Heart right ventricle (tissue), 16 donors: ENCODE measurements at regions of chr17 and their contacts with region 1.

Region 1: GRCh38 chr17:68634403-68634802 is 33.2 kb upstream of the FAM20A start:
- DNase-seq: no peak
- ATAC-seq: no peak
- H3K4me3 ChIP-seq: no peak overlapping the region
- H3K27ac ChIP-seq: no peak overlapping the region
- H3K4me1 ChIP-seq: no peaks in the 10 kb centered on the region
- H3K27me3 ChIP-seq: no peaks in the 10 kb centered on the region
- CTCF ChIP-seq: no peak

Region 2: DNA sequence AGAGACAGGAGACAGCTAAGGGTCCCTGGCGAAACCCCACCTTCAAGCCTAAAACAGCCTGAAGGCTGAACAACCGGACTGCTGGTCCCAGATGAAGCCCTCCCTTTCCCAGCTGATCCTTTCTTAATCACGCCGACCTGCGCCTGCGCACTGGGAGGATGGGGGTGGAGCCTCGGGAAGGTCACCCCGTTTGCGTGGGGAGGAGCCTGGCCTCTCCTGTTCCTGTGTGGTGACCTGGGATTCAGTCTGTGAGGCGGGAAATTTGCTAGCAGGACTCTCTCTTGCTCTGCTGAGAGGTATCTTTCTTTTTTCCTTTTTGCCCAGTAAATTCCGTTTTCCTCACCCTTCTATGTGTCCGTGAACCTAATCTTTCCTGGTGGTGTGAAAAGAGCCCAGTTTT is 42.8 kb before region 1 on chr17:
- intact Hi-C with region 1: no loop called
- DNase-seq: peak; percentile 29 to 31
- ATAC-seq: peak in 2 of 8 donors; percentile 24 to 52
- H3K4me3 ChIP-seq: no peak overlapping the region
- H3K27ac ChIP-seq: peak overlapping the region in 1 of 10 donors; percentile 45
- H3K4me1 ChIP-seq: peaks cover 0 to 50% (median 15%) of the 10 kb centered on the region in 9 donors
- H3K27me3 ChIP-seq: no peaks in the 10 kb centered on the region
- CTCF ChIP-seq: no peak

Region 3: GRCh38 chr17:68892658-68893057 is 258.3 kb after region 1 on chr17:
- intact Hi-C with region 1: no loop called
- DNase-seq: no peak
- ATAC-seq: no peak
- H3K4me3 ChIP-seq: no peak overlapping the region
- H3K27ac ChIP-seq: no peak overlapping the region
- H3K4me1 ChIP-seq: no peaks in the 10 kb centered on the region
- H3K27me3 ChIP-seq: no peaks in the 10 kb centered on the region
- CTCF ChIP-seq: no peak

Region 4: DNA sequence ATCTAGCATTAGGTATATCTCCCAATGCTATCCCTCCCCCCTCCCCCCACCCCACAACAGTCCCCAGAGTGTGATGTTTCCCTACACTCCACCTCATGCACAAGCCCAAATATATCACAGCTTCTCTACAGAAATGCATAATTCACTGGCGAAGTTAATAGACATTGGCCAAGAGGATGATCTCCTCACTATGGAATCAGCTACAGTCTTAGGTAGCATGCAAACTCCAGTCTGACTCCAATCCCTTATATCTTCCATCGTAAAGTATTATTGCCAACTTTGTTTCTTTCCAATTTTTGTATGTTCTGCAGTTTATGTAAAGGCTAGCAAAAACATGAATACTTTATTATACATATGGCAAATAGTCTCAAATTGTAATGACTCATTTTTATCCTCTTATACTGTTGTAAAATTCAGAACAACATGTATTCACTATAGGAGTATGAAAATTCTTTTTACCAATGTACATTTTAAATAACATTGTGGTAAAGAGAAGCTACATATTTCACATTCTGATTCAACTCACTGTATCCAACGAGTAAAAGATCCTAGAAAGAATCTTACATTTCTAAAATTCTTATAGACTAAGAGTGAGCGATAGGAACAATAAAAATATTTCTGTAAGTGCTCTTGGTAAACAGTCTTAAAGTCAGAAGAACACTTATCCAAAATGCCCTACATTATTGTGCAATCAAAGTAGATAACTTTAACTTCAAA is 319.9 kb after region 1 on chr17:
- intact Hi-C with region 1: no loop called
- DNase-seq: no peak
- ATAC-seq: peak in 5 of 8 donors; percentile 5 to 55 (median 36)
- H3K4me3 ChIP-seq: peak overlapping the region in 9 of 10 donors; percentile 32 to 60 (median 49)
- H3K27ac ChIP-seq: peak overlapping the region; percentile 35 to 83 (median 58)
- H3K4me1 ChIP-seq: peaks cover 0 to 7% (median 0%) of the 10 kb centered on the region in 9 donors
- H3K27me3 ChIP-seq: no peaks in the 10 kb centered on the region
- CTCF ChIP-seq: no peak

Region 5: GRCh38 chr17:69716556-69716955 is 1082.2 kb after region 1 on chr17:
- intact Hi-C with region 1: loop called in 1 of 10 experiments (anchors 5 kb)
- DNase-seq: no peak
- ATAC-seq: no peak
- H3K4me3 ChIP-seq: no peak overlapping the region
- H3K27ac ChIP-seq: no peak overlapping the region
- H3K4me1 ChIP-seq: peaks cover 0 to 23% (median 0%) of the 10 kb centered on the region in 9 donors
- H3K27me3 ChIP-seq: no peaks in the 10 kb centered on the region
- CTCF ChIP-seq: no peak